Mammary epithelial cell (primary cell): ENCODE measurements at regions of chr13 and their contacts with region 1.

Region 1: DNA sequence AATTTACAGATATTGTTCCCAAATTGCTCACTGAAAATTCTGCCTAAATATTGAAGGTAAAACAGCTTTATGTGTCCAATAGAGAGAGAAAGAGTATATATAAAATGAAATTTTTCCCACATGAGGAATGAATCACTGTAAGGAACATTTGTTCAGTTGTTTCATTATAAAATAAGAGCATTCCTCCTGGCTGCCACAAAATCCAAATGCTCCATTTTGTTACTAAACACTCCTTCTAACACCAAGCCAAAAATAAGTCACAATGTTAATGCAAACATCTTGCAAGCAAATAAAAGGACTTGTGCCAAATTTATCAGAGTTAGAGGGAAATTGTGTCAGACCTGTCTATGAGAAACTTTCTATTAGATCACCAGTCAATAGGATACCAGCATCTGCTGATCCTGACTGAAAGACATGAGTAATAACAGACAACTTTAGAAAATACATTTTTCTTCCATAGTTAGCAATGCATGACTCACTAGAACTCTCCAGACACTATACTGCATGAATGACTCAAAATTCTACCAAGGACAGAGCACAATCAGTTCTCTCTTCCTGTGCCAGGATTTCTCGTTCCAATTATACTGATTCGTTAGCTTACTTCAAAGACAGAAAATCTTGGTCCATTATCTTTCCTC is 83.5 kb upstream of the FNDC3A start:
- DNase-seq: peak; percentile 96
- H3K4me3 ChIP-seq: no peak overlapping the region
- H3K27ac ChIP-seq: peak overlapping the region; percentile 88
- H3K4me1 ChIP-seq: peaks cover 35% of the 10 kb centered on the region
- H3K27me3 ChIP-seq: no peaks in the 10 kb centered on the region
- CTCF ChIP-seq: no peak

Region 2: DNA sequence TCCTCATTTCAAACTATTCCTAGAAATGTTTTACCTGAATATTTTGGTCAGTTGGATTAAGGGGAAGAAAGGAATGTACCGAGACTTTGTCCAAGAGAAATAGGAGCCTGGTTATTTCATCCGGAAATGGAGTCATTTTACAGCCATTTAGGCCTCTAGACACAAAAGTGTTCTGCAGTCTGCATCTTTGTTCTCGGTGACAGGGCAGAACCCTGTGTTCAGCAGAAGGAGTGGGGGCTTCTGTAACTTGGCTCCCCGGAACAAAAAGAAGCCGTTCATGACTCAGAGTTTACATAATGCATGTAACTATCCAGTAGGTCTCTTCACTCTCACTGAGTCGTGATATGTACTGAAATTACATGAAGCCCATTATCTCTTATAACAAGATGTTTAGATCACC is 61.9 kb after region 1 on chr13:
- CTCF ChIA-PET with region 1: no interaction called
- dilution Hi-C with region 1: loop called (anchors 5 kb)
- in situ Hi-C with region 1: no loop called
- intact Hi-C with region 1: no loop called
- DNase-seq: peak; percentile 23
- H3K4me3 ChIP-seq: no peak overlapping the region
- H3K27ac ChIP-seq: no peak overlapping the region
- H3K4me1 ChIP-seq: peaks cover 17% of the 10 kb centered on the region
- H3K27me3 ChIP-seq: no peaks in the 10 kb centered on the region
- CTCF ChIP-seq: no peak

Region 3: DNA sequence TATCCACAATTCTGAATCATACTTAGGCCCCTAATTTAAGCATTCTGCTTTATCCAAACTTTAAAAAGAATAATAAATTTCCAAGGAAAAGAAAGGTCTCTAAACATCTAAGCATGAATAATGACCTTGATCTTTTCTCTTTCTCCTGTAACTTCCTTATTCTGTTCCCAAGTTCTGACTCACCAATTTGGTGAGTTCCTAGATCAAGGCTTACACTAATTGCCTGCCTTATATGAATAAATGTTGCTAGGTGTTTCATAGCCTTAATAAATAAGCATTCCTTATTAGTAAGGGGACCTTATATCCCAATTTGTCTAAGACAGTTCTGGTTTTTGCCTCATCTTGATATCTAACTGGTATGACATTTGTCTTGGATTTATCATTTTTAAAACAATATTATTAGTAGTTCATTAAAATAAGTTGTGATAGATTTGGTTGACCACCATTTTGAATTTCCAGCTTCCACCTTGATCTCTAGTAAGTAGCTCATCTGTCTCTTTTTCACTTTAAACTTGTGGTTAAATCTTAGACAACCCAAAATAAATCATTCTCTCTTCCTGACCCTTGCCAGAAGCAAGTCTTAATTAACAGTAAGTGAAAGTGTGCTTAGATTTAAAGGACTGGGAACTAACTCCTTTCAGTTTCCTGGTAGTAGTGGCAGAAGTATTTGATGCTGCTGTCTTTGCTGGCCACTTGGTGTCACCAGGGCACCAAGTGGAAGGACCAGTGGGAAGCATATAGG is 206.8 kb after region 1 on chr13:
- CTCF ChIA-PET with region 1: no interaction called
- dilution Hi-C with region 1: no loop called
- in situ Hi-C with region 1: no loop called
- intact Hi-C with region 1: loop called (anchors 10 kb)
- DNase-seq: no peak
- H3K4me3 ChIP-seq: no peak overlapping the region
- H3K27ac ChIP-seq: peak overlapping the region; percentile 14
- H3K4me1 ChIP-seq: peaks cover 22% of the 10 kb centered on the region
- H3K27me3 ChIP-seq: no peaks in the 10 kb centered on the region
- CTCF ChIP-seq: peak; percentile 13 to 51

Region 4: GRCh38 chr13:49146950-49147355 is 254.8 kb after region 1 on chr13:
- CTCF ChIA-PET with region 1: no interaction called
- dilution Hi-C with region 1: no loop called
- in situ Hi-C with region 1: no loop called
- intact Hi-C with region 1: no loop called
- DNase-seq: peak; percentile 16
- H3K4me3 ChIP-seq: no peak overlapping the region
- H3K27ac ChIP-seq: no peak overlapping the region
- H3K4me1 ChIP-seq: no peaks in the 10 kb centered on the region
- H3K27me3 ChIP-seq: no peaks in the 10 kb centered on the region
- CTCF ChIP-seq: no peak

Region 5: GRCh38 chr13:49428051-49428763 is 536.0 kb after region 1 on chr13:
- CTCF ChIA-PET with region 1: no interaction called
- dilution Hi-C with region 1: no loop called
- in situ Hi-C with region 1: no loop called
- intact Hi-C with region 1: no loop called
- DNase-seq: no peak
- H3K4me3 ChIP-seq: no peak overlapping the region
- H3K27ac ChIP-seq: no peak overlapping the region
- H3K4me1 ChIP-seq: no peaks in the 10 kb centered on the region
- H3K27me3 ChIP-seq: no peaks in the 10 kb centered on the region
- CTCF ChIP-seq: no peak